PC-9 (cell line): ENCODE measurements at regions of chr19 and their contacts with region 1.

Region 1: DNA sequence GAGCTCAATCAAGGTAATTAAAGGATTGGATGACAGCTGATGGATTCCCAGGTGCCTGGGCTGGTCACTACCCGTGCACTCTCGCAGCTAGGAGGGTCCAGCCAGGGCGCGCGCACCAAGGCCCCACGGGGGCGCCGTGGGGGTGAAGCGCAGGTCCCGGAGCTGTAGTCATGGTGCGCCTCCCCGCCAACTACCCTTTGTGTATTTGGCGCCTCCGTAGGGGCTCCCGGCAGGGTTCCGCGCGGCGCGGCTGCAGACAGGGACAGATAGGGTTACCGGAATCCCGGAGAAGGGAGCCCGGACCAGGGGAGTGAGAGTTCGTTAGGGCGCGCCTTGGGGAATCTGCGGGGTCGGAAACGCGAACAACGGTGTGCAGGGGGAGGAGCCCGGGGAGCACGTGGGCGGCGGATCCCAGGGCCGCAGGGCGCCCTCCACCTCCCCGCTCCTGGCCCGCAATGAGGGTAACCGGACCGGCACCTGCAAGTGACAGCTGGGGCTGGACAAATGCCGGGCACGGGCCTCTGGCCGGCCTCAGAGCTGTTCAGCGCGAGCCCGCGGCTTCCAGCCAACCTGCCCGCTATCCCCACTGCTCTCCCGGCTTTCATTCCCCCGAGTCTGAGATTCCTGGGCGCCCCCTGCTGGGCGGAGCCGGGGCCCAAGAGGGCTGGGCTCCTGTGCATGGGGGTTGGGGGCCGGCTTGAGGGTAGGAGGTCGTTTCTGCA is 3.4 kb upstream of the PRAM1 start:
- DNase-seq: peak in 1 of 2 experiments; percentile 72
- H3K4me3 ChIP-seq: peak overlapping the region; percentile 73
- H3K27ac ChIP-seq: no peak overlapping the region
- H3K4me1 ChIP-seq: no peaks in the 10 kb centered on the region
- H3K27me3 ChIP-seq: no peaks in the 10 kb centered on the region
- CTCF ChIP-seq: peak; percentile 94

Region 2: DNA sequence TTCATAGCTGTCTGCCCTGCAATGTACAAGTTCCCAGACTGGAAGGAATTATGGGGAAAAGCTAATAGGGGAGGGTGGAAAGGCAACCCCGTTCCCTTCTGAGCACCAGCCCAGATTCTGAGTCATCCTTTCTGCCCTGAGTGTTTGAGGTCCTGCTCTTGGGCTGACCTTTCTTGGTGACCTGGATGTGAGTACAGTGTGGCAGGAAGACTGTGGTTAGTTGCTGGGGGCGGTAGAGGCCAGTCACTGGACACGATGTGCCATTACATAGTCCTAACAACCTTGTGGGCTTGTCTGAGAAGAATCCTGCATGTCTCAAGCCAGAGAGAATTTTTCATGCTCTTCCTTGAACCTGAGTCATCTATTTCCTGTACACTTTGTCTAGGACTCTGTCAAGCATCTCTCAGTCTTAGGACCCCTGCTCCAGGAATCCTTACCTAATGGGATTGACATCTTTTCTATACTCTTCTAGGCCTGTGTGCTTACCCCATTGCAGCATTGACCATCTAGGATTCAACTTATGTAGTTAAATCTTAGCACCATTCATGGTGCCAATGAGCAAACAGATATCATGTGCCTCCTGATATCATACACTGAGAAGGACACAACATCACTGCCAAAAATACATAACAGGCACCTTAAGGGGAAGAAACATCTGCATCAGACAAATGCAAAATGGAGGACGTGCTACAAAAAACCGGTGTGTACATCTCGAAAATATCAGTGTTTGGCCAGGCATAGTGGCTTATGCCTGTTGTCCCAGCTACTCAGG is 150.0 kb before region 1 on chr19:
- CTCF ChIA-PET with region 1: interaction called, 10 read pairs
- POLR2A ChIA-PET with region 1: interaction called, 6 read pairs
- intact Hi-C with region 1: loop called (anchors 10 kb)
- DNase-seq: peak; percentile 70 to 98
- H3K4me3 ChIP-seq: no peak overlapping the region
- H3K27ac ChIP-seq: peak overlapping the region; percentile 59
- H3K4me1 ChIP-seq: peaks cover 48% of the 10 kb centered on the region
- H3K27me3 ChIP-seq: no peaks in the 10 kb centered on the region
- CTCF ChIP-seq: 0 out of 2 replicates have a peak, but pooled peaks have one; percentile 14

Region 3: DNA sequence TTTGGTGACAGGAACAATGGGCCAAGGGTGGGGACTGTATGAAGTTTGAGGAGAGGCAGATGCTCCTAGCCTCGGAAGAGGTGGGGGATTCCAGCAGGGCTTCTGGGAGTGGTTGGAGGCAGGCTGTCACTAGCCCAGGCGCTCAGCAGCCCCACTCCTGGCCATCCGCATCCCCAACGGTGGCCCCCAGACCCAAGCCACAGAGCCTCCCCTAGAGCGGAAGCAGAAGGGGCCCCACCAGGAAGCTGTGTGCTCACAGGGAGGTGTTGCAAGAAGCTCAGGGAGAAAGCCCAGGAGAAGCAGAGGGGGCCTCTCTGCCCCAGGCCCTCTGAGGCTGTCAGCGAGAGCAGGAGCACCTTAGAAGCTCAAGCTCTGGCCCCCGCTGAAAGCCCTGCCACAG is 11.7 kb before region 1 on chr19:
- CTCF ChIA-PET with region 1: interaction called, 4 read pairs
- POLR2A ChIA-PET with region 1: interaction called, 19 read pairs
- intact Hi-C with region 1: no loop called
- DNase-seq: no peak
- H3K4me3 ChIP-seq: no peak overlapping the region
- H3K27ac ChIP-seq: no peak overlapping the region
- H3K4me1 ChIP-seq: no peaks in the 10 kb centered on the region
- H3K27me3 ChIP-seq: no peaks in the 10 kb centered on the region
- CTCF ChIP-seq: no peak

Region 4: GRCh38 chr19:8517551-8518442 is 12.0 kb after region 1 on chr19:
- CTCF ChIA-PET with region 1: no interaction called
- POLR2A ChIA-PET with region 1: no interaction called
- intact Hi-C with region 1: no loop called
- DNase-seq: no peak
- H3K4me3 ChIP-seq: no peak overlapping the region
- H3K27ac ChIP-seq: no peak overlapping the region
- H3K4me1 ChIP-seq: peaks cover 6% of the 10 kb centered on the region
- H3K27me3 ChIP-seq: no peaks in the 10 kb centered on the region
- CTCF ChIP-seq: no peak